H1 (cell line): ENCODE measurements at regions of chr11 and their contacts with region 1.

Region 1: DNA sequence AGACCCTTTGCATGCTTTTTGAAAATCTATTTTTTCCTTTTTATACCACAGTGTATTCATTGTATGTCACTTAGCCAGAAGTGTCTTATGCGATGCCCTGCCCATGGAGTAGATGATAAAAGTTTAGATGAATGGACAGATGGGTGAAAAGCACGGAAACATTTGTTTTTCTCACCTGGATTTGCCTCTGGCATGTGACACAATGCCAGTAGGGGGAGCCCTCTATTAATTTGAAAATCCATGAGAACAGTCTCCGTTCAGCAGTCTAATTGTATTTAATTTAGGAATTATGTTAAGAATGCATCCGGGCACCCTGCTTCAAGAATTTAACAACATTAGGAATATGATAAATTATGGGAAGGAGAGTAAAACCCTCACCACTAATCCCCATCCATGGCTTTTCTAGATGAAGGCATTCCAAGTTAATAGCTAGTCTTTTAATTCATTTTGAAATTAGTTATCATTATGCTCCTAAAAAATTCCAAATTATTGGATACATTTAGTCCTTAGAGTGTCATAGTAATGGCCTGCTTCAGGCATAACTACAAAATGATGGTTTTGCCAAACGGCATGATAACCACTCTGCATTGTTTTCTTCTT is 55.3 kb upstream of the ALKBH3 start:
- DNase-seq: no peak
- H3K4me3 ChIP-seq: no peak overlapping the region
- H3K27ac ChIP-seq: no peak overlapping the region
- H3K4me1 ChIP-seq: no peaks in the 10 kb centered on the region
- H3K27me3 ChIP-seq: peaks cover 0 to 1% (median 0%) of the 10 kb centered on the region in 4 experiments; a peak in 1 of 7 replicates
- CTCF ChIP-seq: peak in 2 of 3 experiments; percentile 49 to 66; a peak in 3 of 4 replicates
- EP300 ChIP-seq: no peak
- POLR2A ChIP-seq: no peak
- RAD21 ChIP-seq: peak; percentile 41 to 53

Region 2: DNA sequence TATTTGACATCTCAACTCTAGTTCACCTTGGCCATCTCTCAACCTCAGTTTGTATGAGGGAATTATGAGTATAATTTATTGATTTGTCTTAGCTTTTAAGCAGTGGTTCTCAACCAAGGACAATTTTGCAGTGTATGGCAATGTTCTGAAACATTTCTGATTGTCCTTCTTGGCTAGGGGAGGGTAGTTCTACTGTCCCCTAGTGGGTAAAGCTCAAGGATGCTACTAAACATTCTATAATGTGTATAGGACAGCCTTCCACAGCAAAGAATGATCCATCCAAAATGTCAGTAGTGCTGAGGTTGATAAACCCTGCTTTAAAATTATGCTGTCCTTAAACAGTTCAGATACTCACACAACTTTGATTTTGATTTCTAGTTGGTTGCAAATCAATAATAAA is 22.8 kb before region 1 on chr11:
- CTCF ChIA-PET with region 1: interaction called, 24 read pairs
- POLR2A ChIA-PET with region 1: no interaction called
- DNase-seq: no peak
- H3K4me3 ChIP-seq: no peak overlapping the region
- H3K27ac ChIP-seq: no peak overlapping the region
- H3K4me1 ChIP-seq: no peaks in the 10 kb centered on the region
- H3K27me3 ChIP-seq: no peaks in the 10 kb centered on the region
- CTCF ChIP-seq: peak in 1 of 3 experiments; percentile 46; a peak in 2 of 4 replicates
- EP300 ChIP-seq: no peak
- POLR2A ChIP-seq: no peak
- RAD21 ChIP-seq: peak; percentile 14 to 41; a peak in 3 of 4 replicates

Region 3: GRCh38 chr11:43810929-43811596 is 14.3 kb before region 1 on chr11:
- CTCF ChIA-PET with region 1: interaction called, 22 read pairs
- POLR2A ChIA-PET with region 1: no interaction called
- DNase-seq: no peak
- H3K4me3 ChIP-seq: no peak overlapping the region
- H3K27ac ChIP-seq: no peak overlapping the region
- H3K4me1 ChIP-seq: no peaks in the 10 kb centered on the region
- H3K27me3 ChIP-seq: no peaks in the 10 kb centered on the region
- CTCF ChIP-seq: peak in 1 of 3 experiments; percentile 23; a peak in 1 of 4 replicates
- EP300 ChIP-seq: no peak
- POLR2A ChIP-seq: no peak
- RAD21 ChIP-seq: peak; percentile 41 to 49

Region 4: GRCh38 chr11:43842021-43842420 is 16.7 kb after region 1 on chr11:
- CTCF ChIA-PET with region 1: interaction called, 33 read pairs
- POLR2A ChIA-PET with region 1: no interaction called
- DNase-seq: no peak
- H3K4me3 ChIP-seq: no peak overlapping the region
- H3K27ac ChIP-seq: no peak overlapping the region
- H3K4me1 ChIP-seq: peaks cover 0 to 2% (median 0%) of the 10 kb centered on the region in 4 experiments; a peak in 1 of 7 replicates
- H3K27me3 ChIP-seq: no peaks in the 10 kb centered on the region
- CTCF ChIP-seq: no peak
- EP300 ChIP-seq: no peak
- POLR2A ChIP-seq: no peak
- RAD21 ChIP-seq: no peak

Region 5: GRCh38 chr11:43895601-43896000 is 70.3 kb after region 1 on chr11:
- CTCF ChIA-PET with region 1: no interaction called
- POLR2A ChIA-PET with region 1: no interaction called
- DNase-seq: no peak
- H3K4me3 ChIP-seq: no peak overlapping the region
- H3K27ac ChIP-seq: no peak overlapping the region
- H3K4me1 ChIP-seq: no peaks in the 10 kb centered on the region
- H3K27me3 ChIP-seq: no peaks in the 10 kb centered on the region
- CTCF ChIP-seq: no peak
- EP300 ChIP-seq: no peak
- POLR2A ChIP-seq: no peak
- RAD21 ChIP-seq: no peak